ENCODE measurements at regions of chr2 and their contacts with region 1.

Region 1: DNA sequence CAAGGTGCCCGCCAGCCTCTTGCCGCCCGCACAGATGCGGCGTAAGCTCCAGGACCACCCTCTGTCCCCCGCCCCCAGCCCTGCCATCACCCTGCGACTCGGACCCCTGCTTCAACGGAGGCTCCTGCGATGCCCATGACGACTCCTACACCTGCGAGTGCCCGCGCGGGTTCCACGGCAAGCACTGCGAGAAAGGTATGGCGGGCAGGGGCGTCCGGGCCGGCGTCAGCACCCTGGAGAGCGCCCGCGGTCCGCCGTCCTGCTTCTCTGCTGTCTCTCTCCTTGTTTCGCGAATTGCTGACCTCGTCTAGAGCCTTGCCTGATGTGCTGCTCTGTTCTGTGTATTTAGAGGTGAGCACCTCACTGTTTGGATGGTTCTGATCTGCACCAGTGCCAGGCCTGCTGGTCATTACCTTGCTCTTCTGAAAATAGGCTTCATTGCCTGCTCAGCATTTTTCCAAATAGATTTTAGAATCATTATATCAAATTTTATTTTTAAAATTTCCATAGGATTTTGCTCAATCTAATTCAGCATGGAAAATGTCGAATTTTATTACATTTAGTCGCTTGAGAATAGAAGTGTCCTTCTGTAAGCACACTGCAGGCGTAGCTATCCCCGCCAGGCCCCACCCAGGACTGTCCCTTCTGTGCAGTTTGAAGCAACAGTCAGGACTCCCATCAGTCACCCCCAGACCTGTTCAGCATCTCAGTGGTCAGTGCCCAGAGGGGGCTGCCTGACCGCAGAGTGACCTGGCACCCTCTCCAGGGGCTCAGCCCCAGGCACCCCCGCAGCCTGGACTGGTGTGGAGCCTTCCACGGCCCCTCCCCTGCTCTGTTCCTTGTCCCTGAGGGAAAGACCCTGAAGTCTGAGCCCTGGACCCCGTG is 51.6 kb downstream of the SNED1 start:
- DNase-seq: peak; percentile 8
- H3K4me3 ChIP-seq: no peak overlapping the region
- H3K27ac ChIP-seq: no peak overlapping the region
- H3K4me1 ChIP-seq: no peaks in the 10 kb centered on the region
- H3K27me3 ChIP-seq: no peaks in the 10 kb centered on the region
- CTCF ChIP-seq: no peak
- POLR2A ChIP-seq: no peak

Region 2: DNA sequence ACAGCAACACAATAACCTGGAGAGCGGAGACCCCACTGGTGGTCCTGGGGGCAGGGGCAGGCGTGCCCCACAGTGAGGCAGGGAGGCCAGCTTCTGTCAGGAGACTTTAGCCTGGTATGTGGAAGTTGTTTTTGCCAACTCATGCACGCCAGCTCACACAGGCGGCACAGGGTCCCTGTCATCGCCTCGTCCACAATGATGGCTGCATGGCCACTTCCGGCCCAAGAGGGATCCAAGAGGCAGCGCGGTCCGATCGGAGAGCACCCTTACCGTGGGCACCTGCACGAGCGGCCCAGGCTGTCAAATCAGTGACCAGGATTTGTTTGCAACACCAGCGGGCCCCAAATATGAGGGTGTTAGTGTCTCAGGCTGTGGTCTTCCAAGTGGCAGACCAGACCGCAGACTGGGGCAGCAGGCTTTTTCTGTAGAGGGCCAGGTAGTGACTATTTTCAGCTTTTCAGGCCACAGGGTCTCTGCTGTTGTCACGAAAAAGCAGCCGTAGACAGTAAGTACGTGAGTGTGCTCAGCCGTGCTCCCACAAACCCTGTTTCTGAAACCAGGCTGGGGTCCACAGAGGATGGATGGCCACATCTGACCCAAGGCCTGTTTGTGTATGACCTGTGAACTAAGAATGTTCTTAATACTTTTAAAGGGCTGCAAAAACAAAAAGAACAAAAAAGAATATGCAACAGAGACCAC is 30.4 kb before region 1 on chr2:
- CTCF ChIA-PET with region 1: no interaction called
- POLR2A ChIA-PET with region 1: no interaction called
- dilution Hi-C with region 1: no loop called
- intact Hi-C with region 1: no loop called
- DNase-seq: no peak
- H3K4me3 ChIP-seq: no peak overlapping the region
- H3K27ac ChIP-seq: no peak overlapping the region
- H3K4me1 ChIP-seq: no peaks in the 10 kb centered on the region
- H3K27me3 ChIP-seq: no peaks in the 10 kb centered on the region
- CTCF ChIP-seq: no peak
- POLR2A ChIP-seq: no peak

Region 3: DNA sequence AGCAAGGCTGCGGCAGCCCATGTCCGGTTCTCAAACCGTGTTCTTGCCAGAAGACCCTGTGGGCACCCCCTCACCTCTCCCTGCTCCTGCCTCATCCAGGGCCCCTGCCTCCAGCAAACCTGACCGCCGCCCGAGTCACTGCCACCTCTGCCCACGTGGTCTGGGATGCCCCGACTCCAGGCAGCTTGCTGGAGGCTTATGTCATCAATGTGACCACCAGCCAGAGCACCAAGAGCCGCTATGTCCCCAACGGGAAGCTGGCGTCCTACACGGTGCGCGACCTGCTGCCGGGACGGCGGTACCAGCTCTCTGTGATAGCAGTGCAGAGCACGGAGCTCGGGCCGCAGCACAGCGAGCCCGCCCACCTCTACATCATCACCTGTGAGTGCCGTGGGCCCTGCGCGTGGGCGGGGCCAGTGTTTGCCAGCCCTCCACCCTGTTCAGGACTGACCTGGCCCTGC is 19.9 kb after region 1 on chr2:
- CTCF ChIA-PET with region 1: no interaction called
- POLR2A ChIA-PET with region 1: no interaction called
- dilution Hi-C with region 1: no loop called
- intact Hi-C with region 1: loop called (anchors 1 kb)
- DNase-seq: no peak
- H3K4me3 ChIP-seq: no peak overlapping the region
- H3K27ac ChIP-seq: no peak overlapping the region
- H3K4me1 ChIP-seq: no peaks in the 10 kb centered on the region
- H3K27me3 ChIP-seq: no peaks in the 10 kb centered on the region
- CTCF ChIP-seq: no peak
- POLR2A ChIP-seq: no peak

Region 4: GRCh38 chr2:241096979-241097378 is 47.0 kb after region 1 on chr2:
- CTCF ChIA-PET with region 1: no interaction called
- POLR2A ChIA-PET with region 1: no interaction called
- dilution Hi-C with region 1: no loop called
- intact Hi-C with region 1: no loop called
- DNase-seq: no peak
- H3K4me3 ChIP-seq: no peak overlapping the region
- H3K27ac ChIP-seq: no peak overlapping the region
- H3K4me1 ChIP-seq: peaks cover 7% of the 10 kb centered on the region
- H3K27me3 ChIP-seq: no peaks in the 10 kb centered on the region
- CTCF ChIP-seq: no peak
- POLR2A ChIP-seq: no peak